Activated naive CD4-positive, alpha-beta T cell treated with anti-CD3 and anti-CD28 coated beads, Interleukin-2, amount 10 ng/mL, durations not matched to agents 7 days and 5 days (primary cell): ENCODE measurements at regions of chr2 and their contacts with region 1.

Region 1: DNA sequence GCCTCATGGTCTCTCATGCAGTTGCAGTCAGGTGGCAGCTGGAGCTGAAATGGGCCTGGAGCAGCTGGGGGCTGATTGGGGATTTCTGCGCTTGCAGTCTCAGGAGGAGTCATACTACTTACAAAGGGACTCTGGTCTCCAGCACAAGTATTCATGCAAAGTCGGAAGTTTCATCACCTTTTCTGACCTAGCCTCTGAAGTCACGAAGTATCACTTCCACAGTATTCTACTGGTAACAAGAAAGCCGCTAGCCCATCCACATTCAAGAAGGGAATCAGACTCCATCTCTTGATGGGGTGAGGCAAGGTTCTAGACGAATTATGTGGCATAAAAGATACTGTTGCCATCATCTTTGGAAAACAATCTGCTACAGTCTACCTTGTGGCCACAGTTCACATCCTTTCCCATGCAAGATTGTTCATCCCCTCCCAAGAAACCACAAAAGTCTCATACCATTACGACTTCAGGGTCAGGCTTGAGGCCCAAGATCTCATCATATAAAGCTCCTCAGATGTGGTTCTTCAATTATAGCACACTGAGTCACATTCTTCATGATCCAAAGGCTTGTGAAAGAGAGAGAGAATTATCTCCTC is 95.3 kb downstream of the SMC6 start:
- DNase-seq: no peak
- H3K4me3 Mint-ChIP-seq: no peak overlapping the region
- H3K27ac Mint-ChIP-seq: no peak overlapping the region
- H3K4me1 Mint-ChIP-seq: peaks cover 11% of the 10 kb centered on the region
- H3K27me3 Mint-ChIP-seq: no peaks in the 10 kb centered on the region

Region 2: DNA sequence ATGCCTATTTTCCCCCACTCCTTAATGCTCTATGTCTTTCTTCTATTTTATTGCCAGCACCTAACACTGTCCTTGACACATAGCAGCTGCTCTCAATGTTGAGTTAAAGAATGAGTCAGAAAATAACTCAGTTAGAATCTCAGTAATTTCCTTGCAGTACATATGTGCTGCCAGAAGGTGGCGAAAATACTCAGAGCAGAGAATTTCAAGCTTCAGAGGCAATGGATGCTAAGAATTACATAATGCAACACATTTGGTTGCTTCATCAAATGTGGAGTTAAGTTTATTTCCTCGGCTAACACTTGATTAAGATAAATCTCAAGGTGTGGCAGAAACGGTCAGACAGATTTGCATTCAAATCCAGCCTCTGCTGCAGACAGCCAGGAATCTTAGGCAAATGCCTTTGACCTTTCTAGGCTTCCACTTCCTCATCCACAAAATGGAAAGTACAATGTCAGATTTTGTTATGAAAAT is 12.2 kb before region 1 on chr2:
- CTCF ChIA-PET with region 1: interaction called, 16 read pairs
- DNase-seq: peak; percentile 54
- H3K4me3 Mint-ChIP-seq: no peak overlapping the region
- H3K27ac Mint-ChIP-seq: no peak overlapping the region
- H3K4me1 Mint-ChIP-seq: no peaks in the 10 kb centered on the region
- H3K27me3 Mint-ChIP-seq: no peaks in the 10 kb centered on the region